Transverse colon (tissue), 4 donors: ENCODE measurements at regions of chrX and their contacts with region 1.

Region 1: DNA sequence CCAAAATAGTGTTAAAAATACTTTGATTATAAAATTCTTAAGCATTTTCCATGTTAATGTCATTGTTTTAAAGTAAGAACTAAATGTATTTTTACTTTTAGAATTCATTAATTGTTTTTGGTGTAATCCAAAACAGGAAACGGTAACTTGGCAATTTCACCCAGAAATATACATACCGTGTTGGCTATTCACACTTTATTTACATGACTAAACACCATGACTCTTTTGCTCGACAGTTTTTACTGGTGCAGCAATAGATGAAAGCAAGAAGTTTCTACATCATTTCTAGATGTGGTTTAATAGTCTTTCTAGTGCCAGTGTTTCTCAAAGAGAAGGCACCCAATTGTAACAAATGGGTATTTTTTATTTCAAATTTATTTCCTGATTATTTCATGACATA is 25.6 kb upstream of the MAGEA1 start:
- DNase-seq: no peak
- H3K4me3 ChIP-seq: no peak overlapping the region
- H3K27ac ChIP-seq: no peak overlapping the region
- H3K4me1 ChIP-seq: no peaks in the 10 kb centered on the region
- H3K27me3 ChIP-seq: no peaks in the 10 kb centered on the region
- CTCF ChIP-seq: no peak
- EP300 ChIP-seq: no peak
- POLR2A ChIP-seq: no peak

Region 2: GRCh38 chrX:153353416-153353815 is 199.9 kb after region 1 on chrX:
- in situ Hi-C with region 1: loop called in 1 of 4 experiments (anchors 25 kb)
- intact Hi-C with region 1: no loop called
- DNase-seq: no peak
- H3K4me3 ChIP-seq: no peak overlapping the region
- H3K27ac ChIP-seq: no peak overlapping the region
- H3K4me1 ChIP-seq: no peaks in the 10 kb centered on the region
- H3K27me3 ChIP-seq: no peaks in the 10 kb centered on the region
- CTCF ChIP-seq: no peak
- EP300 ChIP-seq: no peak
- POLR2A ChIP-seq: no peak